Naive thymus-derived CD4-positive, alpha-beta T cell (primary cell): ENCODE measurements at regions of chr11 and their contacts with region 1.

Region 1: GRCh38 chr11:113994077-113994954 is 19.4 kb downstream of the HTR3A start:
- DNase-seq: peak in 6 of 9 donors; percentile 12 to 50 (median 24)
- ATAC-seq: peak; percentile 57
- H3K4me3 ChIP-seq: no peak overlapping the region
- H3K4me3 Mint-ChIP-seq: no peak overlapping the region
- H3K27ac ChIP-seq: no peak overlapping the region
- H3K27ac Mint-ChIP-seq: no peak overlapping the region
- H3K4me1 ChIP-seq: no peaks in the 10 kb centered on the region
- H3K4me1 Mint-ChIP-seq: peaks cover 0 to 12% (median 5%) of the 10 kb centered on the region in 7 donors
- H3K27me3 ChIP-seq: no peaks in the 10 kb centered on the region
- H3K27me3 Mint-ChIP-seq: peaks cover 2 to 43% (median 29%) of the 10 kb centered on the region in 5 donors

Region 2: GRCh38 chr11:113675003-113675561 is 319.2 kb before region 1 on chr11:
- CTCF ChIA-PET with region 1: no interaction called
- POLR2A ChIA-PET with region 1: no interaction called
- intact Hi-C with region 1: no loop called
- DNase-seq: no peak
- ATAC-seq: no peak
- H3K4me3 ChIP-seq: no peak overlapping the region
- H3K4me3 Mint-ChIP-seq: no peak overlapping the region
- H3K27ac ChIP-seq: no peak overlapping the region
- H3K27ac Mint-ChIP-seq: no peak overlapping the region
- H3K4me1 ChIP-seq: no peaks in the 10 kb centered on the region
- H3K4me1 Mint-ChIP-seq: peaks cover 0 to 13% (median 0%) of the 10 kb centered on the region in 7 donors
- H3K27me3 ChIP-seq: no peaks in the 10 kb centered on the region
- H3K27me3 Mint-ChIP-seq: peaks cover 0 to 13% (median 6%) of the 10 kb centered on the region in 5 donors

Region 3: DNA sequence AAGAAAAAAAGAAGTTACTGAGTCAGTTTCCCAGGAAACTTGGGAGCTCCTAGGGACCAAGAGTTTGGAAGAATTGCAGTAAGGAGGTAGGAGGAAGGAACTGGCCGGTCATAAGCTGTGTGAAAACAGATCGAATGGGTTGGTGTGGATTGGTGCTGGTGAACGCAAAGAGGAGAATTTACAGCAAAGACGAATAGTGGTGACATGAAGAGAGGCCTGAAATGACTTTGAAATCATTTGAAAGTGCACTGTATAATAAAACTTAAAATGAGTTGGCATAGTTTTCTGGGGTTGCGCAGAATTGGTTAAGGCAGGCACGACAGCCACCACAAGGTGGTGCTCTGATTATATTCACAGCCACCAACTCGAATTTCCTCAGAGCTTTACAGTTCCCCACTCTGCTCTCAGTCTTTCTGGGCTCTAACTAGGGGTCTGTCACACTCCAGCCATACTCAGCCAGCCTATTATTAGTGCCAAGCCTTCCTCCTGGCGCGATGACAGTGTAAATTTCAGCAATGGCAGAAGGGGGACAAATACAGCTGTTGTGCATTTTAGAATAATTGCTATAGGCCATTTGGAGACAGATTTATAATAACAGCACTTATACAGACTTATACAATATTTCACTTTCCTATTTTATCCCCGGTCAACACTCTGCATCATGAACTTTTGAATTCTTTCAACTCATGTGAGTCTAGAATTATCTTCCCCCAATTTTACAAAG is 98.0 kb before region 1 on chr11:
- CTCF ChIA-PET with region 1: interaction called, 10 read pairs
- POLR2A ChIA-PET with region 1: no interaction called
- intact Hi-C with region 1: loop called (anchors 1 to 10 kb)
- DNase-seq: peak in 5 of 9 donors; percentile 24 to 42 (median 37)
- ATAC-seq: peak; percentile 80
- H3K4me3 ChIP-seq: no peak overlapping the region
- H3K4me3 Mint-ChIP-seq: no peak overlapping the region
- H3K27ac ChIP-seq: no peak overlapping the region
- H3K27ac Mint-ChIP-seq: no peak overlapping the region
- H3K4me1 ChIP-seq: no peaks in the 10 kb centered on the region
- H3K4me1 Mint-ChIP-seq: peaks cover 0 to 4% (median 0%) of the 10 kb centered on the region in 7 donors
- H3K27me3 ChIP-seq: no peaks in the 10 kb centered on the region
- H3K27me3 Mint-ChIP-seq: peaks cover 0 to 9% (median 0%) of the 10 kb centered on the region in 5 donors